H1 (cell line): ENCODE measurements at regions of chr1 and their contacts with region 1.

Region 1: DNA sequence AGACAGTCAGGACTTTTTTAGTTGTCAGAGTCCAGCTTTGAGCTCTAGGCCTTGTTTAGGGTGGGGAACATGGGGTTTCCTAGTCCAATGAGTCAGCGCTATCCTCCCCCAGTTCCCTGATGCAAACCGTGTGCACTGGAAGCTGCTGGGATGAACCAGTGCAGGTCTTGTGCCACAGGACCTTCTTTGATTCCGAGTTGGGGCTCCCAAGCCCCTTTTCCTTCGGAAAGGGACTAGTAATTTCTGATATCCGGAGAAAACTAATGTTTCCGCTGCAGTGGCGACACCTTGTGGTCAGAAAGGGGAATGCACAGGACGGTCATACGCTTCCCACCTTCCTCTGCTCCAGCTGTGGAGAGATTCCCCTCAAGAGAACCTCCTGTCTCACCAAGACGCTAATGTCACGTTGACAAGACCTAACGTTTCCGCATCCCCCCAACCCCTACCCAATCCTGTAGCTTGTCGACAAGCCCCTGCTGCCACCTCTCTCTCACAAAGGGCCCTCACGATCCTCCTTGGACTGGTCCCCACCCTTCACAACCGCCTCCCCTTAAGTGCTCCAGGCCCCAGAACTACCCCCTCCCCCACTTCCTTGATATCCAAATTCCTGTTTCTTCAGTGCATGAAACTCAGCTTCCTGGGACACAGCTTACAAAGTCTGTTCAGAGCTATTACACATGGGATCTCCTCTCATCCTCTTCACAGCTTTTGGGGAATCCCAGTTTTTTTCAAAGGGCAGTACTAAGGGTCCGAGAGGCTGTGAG is 30.9 kb downstream of the GPA33 start:
- DNase-seq: peak; percentile 77 to 96
- H3K4me3 ChIP-seq: peak overlapping the region in 2 of 4 experiments; percentile 7 to 35; a peak in 3 of 8 replicates
- H3K27ac ChIP-seq: no peak overlapping the region
- H3K4me1 ChIP-seq: peaks cover 0 to 8% (median 2%) of the 10 kb centered on the region in 4 experiments; a peak in 4 of 7 replicates
- H3K27me3 ChIP-seq: no peaks in the 10 kb centered on the region
- CTCF ChIP-seq: peak; percentile 86 to 98 (median 92)
- EP300 ChIP-seq: no peak
- POLR2A ChIP-seq: no peak
- RAD21 ChIP-seq: peak; percentile 90 to 94

Region 2: DNA sequence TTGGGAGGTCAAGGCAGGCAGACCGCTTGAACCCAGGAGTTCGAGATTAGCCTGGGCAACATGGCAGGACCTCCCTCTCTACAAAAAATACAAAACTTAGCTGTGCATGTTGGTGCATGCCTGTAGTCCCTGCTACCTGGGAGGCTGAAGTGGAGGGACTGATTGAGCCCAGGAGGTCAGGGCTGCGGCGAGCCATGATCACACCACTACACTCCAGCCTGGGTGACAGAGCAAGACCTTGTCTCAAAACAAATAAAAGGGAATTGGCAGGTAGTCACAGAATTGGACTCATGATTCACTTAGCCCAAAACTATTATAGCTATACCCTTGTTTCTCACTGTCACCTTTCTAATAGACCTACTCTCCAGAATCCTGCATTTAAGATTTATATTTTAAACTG is 188.6 kb before region 1 on chr1:
- CTCF ChIA-PET with region 1: interaction called, 14 read pairs
- POLR2A ChIA-PET with region 1: interaction called, 4 read pairs
- DNase-seq: no peak
- H3K4me3 ChIP-seq: no peak overlapping the region
- H3K27ac ChIP-seq: no peak overlapping the region
- H3K4me1 ChIP-seq: peaks cover 0 to 7% (median 4%) of the 10 kb centered on the region in 4 experiments; a peak in 5 of 7 replicates
- H3K27me3 ChIP-seq: no peaks in the 10 kb centered on the region
- CTCF ChIP-seq: no peak
- EP300 ChIP-seq: no peak
- POLR2A ChIP-seq: no peak
- RAD21 ChIP-seq: no peak

Region 3: DNA sequence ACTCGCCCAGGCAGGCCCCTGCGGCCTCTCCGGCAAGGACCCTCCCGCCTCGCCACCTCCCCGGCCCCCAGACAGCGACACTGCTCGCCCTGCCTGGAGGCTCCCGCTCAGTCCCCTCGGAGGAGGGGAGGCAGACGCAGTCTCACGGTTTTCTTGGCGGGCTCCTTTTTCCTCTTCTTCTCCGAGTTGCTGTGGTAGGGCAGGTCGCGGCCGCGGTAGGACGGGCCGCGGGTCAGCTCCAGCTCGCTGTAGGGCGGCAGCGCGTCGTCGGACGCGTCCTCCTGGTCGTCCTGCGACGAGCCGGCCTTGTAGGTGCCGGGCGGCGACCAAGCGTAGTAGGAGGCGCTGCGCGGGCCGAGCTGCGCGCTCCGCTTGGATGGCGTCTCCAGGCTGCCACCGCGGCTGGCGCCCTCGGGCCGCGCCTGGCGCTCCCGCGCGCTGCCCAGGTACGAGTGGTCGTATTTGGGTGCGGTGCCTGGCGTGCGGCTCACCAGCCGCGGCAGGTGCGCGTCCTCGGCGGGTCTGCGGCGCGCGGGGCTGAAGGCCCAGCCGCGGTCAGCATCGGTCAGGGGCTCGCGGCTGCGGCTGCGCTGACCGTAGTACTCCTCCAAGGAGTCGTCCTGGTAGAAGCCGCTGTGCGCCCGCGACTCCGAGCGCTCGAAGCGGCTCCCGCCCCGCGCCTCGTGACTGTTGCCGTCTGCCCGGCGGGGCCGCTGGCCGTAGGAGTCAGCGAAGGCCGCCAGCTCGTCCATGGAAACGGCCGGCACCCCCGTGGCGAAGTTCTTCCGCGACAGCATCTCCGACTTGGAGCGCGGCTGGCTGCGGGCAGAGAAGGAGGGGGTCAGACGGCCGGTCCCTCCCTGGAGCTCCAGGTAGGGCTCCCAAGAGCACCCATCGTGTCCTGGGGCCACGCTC is 138.4 kb before region 1 on chr1:
- CTCF ChIA-PET with region 1: interaction called, 874 read pairs
- POLR2A ChIA-PET with region 1: no interaction called
- DNase-seq: peak; percentile 25 to 78
- H3K4me3 ChIP-seq: peak overlapping the region; percentile 22 to 57 (median 36)
- H3K27ac ChIP-seq: no peak overlapping the region
- H3K4me1 ChIP-seq: peaks cover 1 to 6% (median 3%) of the 10 kb centered on the region in 4 experiments; a peak in 5 of 7 replicates
- H3K27me3 ChIP-seq: peaks cover 5 to 37% (median 36%) of the 10 kb centered on the region in 4 experiments
- CTCF ChIP-seq: no peak
- EP300 ChIP-seq: no peak
- POLR2A ChIP-seq: no peak
- RAD21 ChIP-seq: no peak

Region 4: GRCh38 chr1:167043752-167044488 is 15.3 kb before region 1 on chr1:
- CTCF ChIA-PET with region 1: interaction called, 18 read pairs
- POLR2A ChIA-PET with region 1: no interaction called
- DNase-seq: no peak
- H3K4me3 ChIP-seq: 0 out of 8 replicates have a peak overlapping the region, but pooled peaks of 1 of the 4 experiments have one; percentile 9
- H3K27ac ChIP-seq: no peak overlapping the region
- H3K4me1 ChIP-seq: peaks cover 0 to 3% (median 0%) of the 10 kb centered on the region in 4 experiments; a peak in 1 of 7 replicates
- H3K27me3 ChIP-seq: no peaks in the 10 kb centered on the region
- CTCF ChIP-seq: no peak
- EP300 ChIP-seq: no peak
- POLR2A ChIP-seq: no peak
- RAD21 ChIP-seq: no peak

Region 5: DNA sequence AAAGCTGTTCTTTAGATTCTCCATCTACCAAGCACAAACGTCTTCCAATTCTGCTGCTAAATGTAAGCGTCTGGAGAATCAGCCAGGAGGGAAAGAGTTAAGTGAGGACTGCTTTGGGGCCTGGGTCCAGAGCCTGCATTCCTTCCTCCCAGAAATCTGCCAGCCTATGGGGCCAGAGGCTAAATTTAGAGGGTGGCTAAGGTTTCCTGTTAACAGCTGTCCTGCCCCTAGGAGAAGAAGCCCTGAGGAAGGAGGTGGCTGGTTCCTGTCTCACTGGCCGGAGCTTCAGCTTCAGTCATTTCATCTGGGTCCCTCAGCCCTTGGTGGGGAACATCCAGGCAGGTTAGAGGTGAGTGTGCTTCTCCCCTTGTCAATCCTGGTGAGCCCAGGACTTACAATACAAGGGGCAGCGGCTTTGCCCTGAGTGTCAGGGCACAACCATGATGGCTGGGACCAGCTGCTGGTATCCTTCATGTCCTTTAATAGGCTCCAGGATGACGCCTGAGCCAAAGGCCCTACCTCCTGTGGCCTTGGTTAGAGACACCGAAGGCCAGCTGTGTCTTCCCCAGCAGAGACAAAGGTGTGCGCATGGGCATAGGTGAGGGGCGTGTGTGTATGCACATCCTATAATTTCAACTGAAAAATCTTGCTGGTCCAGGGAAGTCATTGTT is 34.8 kb after region 1 on chr1 and contains the start of gene STYXL2:
- CTCF ChIA-PET with region 1: interaction called, 22 read pairs
- POLR2A ChIA-PET with region 1: no interaction called
- DNase-seq: no peak
- H3K4me3 ChIP-seq: no peak within 1 kb of the TSS
- H3K27ac ChIP-seq: no peak within 1 kb of the TSS
- H3K4me1 ChIP-seq: peaks cover 3 to 6% (median 4%) of the 10 kb centered on the region in 4 experiments; a peak in 3 of 7 replicates
- H3K27me3 ChIP-seq: no peaks in the 10 kb centered on the region
- CTCF ChIP-seq: no peak
- EP300 ChIP-seq: no peak
- POLR2A ChIP-seq: no peak
- RAD21 ChIP-seq: no peak
- total RNA-seq, gene STYXL2: 0.22 and 0.34 TPM in 2 replicates

Region 6: GRCh38 chr1:167191953-167192352 is 132.7 kb after region 1 on chr1:
- CTCF ChIA-PET with region 1: no interaction called
- POLR2A ChIA-PET with region 1: no interaction called
- DNase-seq: no peak
- H3K4me3 ChIP-seq: no peak overlapping the region
- H3K27ac ChIP-seq: no peak overlapping the region
- H3K4me1 ChIP-seq: no peaks in the 10 kb centered on the region; a peak in 1 of 7 replicates
- H3K27me3 ChIP-seq: no peaks in the 10 kb centered on the region
- CTCF ChIP-seq: no peak
- EP300 ChIP-seq: no peak
- POLR2A ChIP-seq: no peak
- RAD21 ChIP-seq: no peak

Region 7: GRCh38 chr1:167220537-167221125 is 161.4 kb after region 1 on chr1 and contains the start of gene POU2F1:
- CTCF ChIA-PET with region 1: interaction called, 6 read pairs
- POLR2A ChIA-PET with region 1: interaction called, 20 read pairs
- DNase-seq: peak; percentile 97 to 99
- H3K4me3 ChIP-seq: peak within 1 kb of the TSS; percentile 69 to 84 (median 74)
- H3K27ac ChIP-seq: peak within 1 kb of the TSS; percentile 99
- H3K4me1 ChIP-seq: peaks cover 0 to 18% (median 0%) of the 10 kb centered on the region in 4 experiments; a peak in 4 of 7 replicates
- H3K27me3 ChIP-seq: no peaks in the 10 kb centered on the region
- CTCF ChIP-seq: peak; percentile 41 to 70 (median 53)
- EP300 ChIP-seq: no peak
- POLR2A ChIP-seq: peak; percentile 71 to 89; a peak in 2 of 3 replicates
- RAD21 ChIP-seq: peak; percentile 44 to 70
- total RNA-seq, gene POU2F1: 55.1 and 57.2 TPM in 2 replicates

Region 8: GRCh38 chr1:167566766-167567165 is 507.5 kb after region 1 on chr1:
- CTCF ChIA-PET with region 1: no interaction called
- POLR2A ChIA-PET with region 1: no interaction called
- DNase-seq: no peak
- H3K4me3 ChIP-seq: no peak overlapping the region
- H3K27ac ChIP-seq: no peak overlapping the region
- H3K4me1 ChIP-seq: no peaks in the 10 kb centered on the region
- H3K27me3 ChIP-seq: no peaks in the 10 kb centered on the region
- CTCF ChIP-seq: no peak
- EP300 ChIP-seq: no peak
- POLR2A ChIP-seq: no peak
- RAD21 ChIP-seq: no peak